Head of caudate nucleus (tissue), 42 donors: ENCODE measurements at regions of chr2 and their contacts with region 1.

Region 1: DNA sequence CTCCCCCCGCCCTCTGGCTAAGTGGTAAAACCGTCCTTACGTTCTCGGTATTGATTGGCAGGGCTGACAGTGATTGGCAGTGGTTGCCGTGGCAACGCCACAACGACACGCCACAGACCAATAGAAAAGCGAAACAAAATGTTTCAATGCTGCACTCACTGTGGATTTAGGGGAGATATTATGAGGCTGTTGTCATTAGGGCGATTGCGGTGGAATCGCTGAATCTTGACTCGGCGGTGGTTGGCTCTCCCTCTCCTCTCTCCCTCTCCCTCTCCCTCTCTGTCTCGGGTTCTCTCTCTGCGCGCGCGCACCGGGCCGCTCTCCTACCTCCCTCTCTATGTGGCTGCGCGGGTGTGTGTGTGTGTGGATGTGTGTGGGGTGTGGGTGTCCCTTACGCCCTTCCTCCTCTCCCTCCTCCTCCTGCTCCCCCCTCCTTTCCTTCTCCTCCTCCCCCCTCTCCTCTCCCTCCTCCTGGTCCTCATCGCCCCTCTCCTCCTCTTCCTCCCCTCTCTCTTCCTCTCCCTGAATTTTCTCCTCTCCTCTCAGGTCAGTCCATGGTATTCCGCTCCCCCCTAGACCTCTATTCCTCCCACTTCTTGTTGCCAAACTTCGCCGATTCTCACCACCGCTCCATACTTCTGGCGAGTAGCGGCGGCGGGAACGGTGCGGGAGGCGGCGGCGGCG is at the start of gene SIX3:
- DNase-seq: peak; percentile 66 to 93 (median 84)

Region 2: GRCh38 chr2:44707945-44708660 is 233.6 kb before region 1 on chr2:
- intact Hi-C with region 1: loop called (anchors 10 kb)
- DNase-seq: peak in 11 of 42 donors; percentile 17 to 68 (median 39)

Region 3: DNA sequence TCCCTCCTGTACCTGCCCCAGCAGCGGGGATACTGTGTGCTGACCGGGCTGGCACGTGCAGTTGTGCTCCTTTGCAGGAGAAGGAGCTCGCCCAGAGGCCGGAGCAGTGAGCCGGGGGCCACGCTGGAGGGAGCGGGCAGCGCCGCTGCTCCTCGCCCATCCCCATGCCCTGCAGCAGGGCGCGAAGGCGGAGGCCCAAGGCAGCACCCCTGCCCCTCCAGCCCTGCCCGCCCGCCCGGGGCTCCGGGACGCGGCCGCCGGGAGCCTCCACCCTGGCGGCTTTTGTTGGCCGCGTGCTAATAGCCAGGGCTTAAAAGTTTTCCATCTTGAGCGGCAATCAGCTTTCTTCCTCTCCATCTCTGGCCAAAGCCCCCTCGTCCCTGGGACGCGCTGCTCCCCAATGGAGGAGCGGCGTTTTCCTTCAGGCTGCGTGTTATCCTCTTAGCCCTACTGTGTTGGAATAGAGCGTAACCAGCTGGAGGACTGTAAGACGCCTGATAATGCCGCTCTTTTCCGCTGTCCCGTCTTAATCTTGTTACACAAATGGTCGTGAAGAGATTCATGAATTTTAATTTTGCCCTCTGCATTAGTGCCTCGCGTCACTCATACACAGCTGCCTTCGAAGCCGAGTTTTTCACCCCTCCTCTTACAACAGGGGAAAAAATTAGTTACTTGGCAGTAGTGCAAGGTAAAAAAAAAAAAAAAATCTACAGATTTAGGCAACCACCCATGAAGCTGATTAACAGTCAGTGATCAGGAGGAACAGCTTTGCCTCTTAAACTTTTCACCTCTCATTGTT is 173.1 kb before region 1 on chr2:
- intact Hi-C with region 1: loop called (anchors 10 kb)
- DNase-seq: peak in 11 of 42 donors; percentile 5 to 52 (median 25)

Region 4: DNA sequence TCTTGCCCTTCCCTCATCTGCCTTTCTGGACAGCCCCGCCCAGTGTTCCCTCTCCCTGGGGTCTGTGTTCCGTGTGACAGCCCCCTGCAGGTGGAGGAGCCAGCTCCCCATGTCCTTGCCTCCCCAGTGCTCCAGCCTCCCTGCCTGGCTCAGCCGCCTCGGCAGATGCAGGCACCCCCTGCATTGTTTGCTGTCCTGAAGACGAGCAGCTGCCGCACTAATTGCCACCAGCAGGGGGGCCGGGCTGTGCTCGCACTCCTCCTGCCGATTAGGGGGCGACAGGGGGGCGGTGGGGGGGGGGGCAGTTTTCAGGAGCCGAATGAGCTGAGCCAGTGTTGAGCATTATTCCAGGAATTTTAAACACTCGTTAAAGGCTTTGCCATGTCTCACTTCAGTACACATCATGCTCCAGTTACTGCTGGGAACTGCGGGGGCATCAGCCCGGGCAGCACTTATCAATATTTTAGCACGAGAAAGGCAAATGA is 23.1 kb after region 1 on chr2:
- intact Hi-C with region 1: no loop called
- DNase-seq: peak in 5 of 42 donors; percentile 41 to 53 (median 47)

Region 5: DNA sequence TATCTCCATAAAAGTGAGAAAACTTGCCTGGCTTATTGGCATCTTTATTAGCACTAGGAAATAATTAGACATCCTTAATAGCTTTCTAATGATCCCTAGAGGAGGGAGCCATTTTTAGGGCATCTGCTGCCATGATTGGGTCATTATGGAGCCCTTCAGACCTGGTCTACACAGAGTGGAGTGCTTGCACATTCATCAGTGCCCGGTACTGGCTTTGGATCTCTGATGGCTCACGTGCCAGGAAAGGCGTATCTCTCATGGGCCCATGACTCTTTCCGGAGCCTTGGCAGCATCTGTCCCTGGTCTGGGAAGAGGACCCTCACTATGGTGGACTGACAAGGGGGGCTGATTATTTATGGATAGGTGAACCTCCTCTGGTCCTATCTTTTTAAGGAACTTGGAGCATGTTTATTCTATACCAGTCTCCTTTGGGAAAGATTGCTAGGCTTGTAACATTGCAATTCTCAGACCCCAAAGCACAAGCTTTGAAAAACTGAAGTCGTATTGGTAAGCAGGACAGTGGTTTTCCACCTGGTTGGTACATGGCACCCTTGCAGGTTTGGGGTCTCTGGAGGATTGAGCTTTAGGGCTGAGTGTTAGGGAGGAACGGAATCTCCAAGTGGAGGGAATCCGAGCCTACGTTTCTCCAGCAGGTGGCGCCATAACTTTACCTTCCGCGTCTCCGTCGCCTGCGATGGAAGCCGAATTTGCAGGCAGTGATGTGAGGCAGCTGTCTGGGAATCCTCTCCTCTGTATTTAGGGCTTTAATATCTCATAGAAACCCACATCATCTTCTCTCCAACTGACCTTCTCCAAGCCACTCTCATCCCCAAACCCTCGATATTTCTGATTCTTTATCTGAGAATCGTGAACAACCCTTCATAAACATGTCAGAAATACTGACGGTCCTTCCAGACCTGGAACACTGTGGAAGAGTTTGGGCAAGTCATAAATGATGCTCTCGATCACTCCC is 39.7 kb after region 1 on chr2:
- intact Hi-C with region 1: no loop called
- DNase-seq: peak; percentile 58 to 93 (median 84)

Region 6: DNA sequence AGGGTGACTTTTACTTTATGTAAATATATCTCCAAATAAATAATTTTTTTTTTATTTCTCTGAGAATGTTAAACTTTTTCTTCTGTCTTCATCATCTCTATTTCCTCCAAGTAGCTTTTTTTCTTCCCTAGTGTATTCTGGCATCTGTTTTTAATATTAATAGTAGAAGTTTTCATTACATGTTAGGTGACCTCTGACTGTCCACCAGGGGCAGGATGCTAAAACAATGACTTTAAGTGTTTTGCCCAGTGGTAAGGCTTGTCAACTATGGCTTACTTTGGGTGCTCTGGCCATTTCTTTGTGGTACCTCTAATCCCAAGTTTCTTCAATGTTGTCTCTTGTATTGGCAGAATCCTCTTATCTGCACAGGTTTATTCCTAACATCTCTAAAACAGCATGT is 542.3 kb after region 1 on chr2:
- intact Hi-C with region 1: no loop called
- DNase-seq: no peak